ENCODE measurements at regions of chr19 and their contacts with region 1.

Region 1: GRCh38 chr19:732148-733069 is 18.5 kb upstream of the MISP start:
- DNase-seq: no peak
- H3K4me3 ChIP-seq: no peak overlapping the region
- H3K4me1 ChIP-seq: no peaks in the 10 kb centered on the region
- H3K27me3 ChIP-seq: no peaks in the 10 kb centered on the region

Region 2: DNA sequence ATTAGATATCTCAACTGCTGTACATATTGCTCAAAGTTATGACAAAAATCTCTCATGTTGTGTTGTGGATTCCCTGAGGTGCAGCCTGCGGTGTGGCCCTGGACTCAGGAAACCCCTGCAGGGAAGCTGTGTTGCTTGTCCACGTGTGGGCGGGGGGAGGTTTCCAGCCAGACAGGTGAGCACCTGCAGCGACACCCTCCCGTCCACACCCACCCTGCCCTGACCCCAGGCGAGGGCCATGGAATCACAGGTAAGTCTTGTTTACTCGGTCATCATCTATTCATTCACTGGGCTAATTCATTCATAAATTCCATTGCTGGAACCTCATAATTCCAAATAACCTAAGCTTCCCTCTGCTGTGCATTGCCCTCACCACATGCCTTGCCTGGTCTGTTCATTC is 455.3 kb before region 1 on chr19:
- in situ Hi-C with region 1: no loop called
- DNase-seq: no peak
- H3K4me3 ChIP-seq: no peak overlapping the region
- H3K4me1 ChIP-seq: no peaks in the 10 kb centered on the region
- H3K27me3 ChIP-seq: peaks cover 3% of the 10 kb centered on the region

Region 3: DNA sequence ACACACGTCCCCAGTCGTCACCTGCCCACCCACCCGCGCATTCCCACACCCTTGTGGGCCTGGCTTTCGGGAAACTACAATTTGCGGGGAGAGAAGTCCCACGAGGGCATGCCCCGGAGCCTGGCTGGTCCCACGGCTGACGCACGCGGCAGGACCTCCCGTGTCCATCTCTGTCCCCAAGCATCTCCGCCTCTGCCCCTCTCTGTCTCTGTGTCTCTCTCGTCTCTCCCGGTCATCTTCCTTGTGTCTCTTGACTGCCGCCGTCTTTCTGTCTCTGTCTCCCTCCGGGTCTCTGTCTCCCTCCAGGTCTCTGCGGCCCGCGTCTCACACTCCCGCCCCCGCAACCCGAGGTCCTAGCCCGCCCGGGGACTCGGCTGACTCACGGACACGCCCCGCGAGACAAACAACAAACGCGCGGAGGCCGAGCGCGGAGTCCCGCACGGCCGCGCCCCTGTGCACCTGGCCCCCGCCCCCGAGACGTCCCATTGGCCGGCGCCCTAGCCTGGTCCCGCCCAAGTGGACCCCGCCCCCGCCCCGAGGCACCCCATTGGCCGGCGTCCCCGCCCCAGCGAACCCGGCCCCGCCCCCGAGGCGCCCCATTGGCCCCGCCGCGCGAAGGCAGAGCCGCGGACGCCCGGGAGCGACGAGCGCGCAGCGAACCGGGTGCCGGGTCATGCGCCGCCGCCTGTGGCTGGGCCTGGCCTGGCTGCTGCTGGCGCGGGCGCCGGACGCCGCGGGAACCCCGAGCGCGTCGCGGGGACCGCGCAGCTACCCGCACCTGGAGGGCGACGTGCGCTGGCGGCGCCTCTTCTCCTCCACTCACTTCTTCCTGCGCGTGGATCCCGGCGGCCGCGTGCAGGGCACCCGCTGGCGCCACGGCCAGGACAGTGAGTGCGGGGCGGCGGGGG is 92.9 kb before region 1 on chr19 and contains the start of gene FGF22:
- in situ Hi-C with region 1: no loop called
- DNase-seq: peak; percentile 77 to 97
- H3K4me3 ChIP-seq: peak within 1 kb of the TSS; percentile 38
- H3K4me1 ChIP-seq: no peaks in the 10 kb centered on the region
- H3K27me3 ChIP-seq: no peaks in the 10 kb centered on the region

Region 4: DNA sequence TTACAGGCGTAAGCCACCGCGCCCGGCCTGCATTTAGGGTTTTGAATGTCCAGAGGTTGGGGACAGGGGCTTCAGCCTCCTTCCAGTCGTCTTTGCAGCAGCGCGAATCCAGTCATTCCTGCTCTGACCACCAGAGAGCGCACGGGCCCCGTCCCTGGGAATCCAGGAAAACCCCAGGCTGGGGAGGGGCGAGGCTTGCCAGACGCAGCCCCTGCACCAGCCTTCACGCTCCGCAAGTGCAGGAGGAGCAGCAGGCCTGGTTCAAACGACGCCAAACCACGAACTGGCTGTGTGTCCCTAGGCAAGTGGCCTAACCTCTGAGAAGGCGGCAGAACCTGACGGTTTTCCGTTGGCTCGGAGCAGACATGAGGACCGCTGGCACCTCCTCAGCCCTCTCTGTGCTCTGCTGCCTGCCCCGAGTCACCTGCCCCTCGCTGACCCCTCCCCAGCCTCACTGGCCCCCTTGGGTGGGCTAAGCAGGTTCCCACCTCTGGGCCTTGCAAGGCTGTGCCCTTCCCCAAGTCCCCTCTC is 67.4 kb before region 1 on chr19:
- in situ Hi-C with region 1: loop called (anchors 5 kb)
- DNase-seq: peak; percentile 82 to 97
- H3K4me3 ChIP-seq: no peak overlapping the region
- H3K4me1 ChIP-seq: peaks cover 12% of the 10 kb centered on the region
- H3K27me3 ChIP-seq: no peaks in the 10 kb centered on the region

Region 5: GRCh38 chr19:805600-806550 is 73.5 kb after region 1 on chr19:
- in situ Hi-C with region 1: no loop called
- DNase-seq: no peak
- H3K4me3 ChIP-seq: no peak overlapping the region
- H3K4me1 ChIP-seq: peaks cover 15% of the 10 kb centered on the region
- H3K27me3 ChIP-seq: no peaks in the 10 kb centered on the region